Activated CD4-positive, alpha-beta memory T cell treated with anti-CD3 and anti-CD28 coated beads for 36 hours (primary cell): ENCODE measurements at regions of chr10 and their contacts with region 1.

Region 1: GRCh38 chr10:72692057-72692910 is at the start of gene MCU:
- DNase-seq: peak; percentile 95
- H3K4me3 Mint-ChIP-seq: peak within 1 kb of the TSS; percentile 82
- H3K27ac Mint-ChIP-seq: peak within 1 kb of the TSS; percentile 48
- H3K4me1 Mint-ChIP-seq: peaks cover 35% of the 10 kb centered on the region
- H3K27me3 Mint-ChIP-seq: no peaks in the 10 kb centered on the region
- total RNA-seq, gene MCU: 17.7 to 19.3 TPM

Region 2: DNA sequence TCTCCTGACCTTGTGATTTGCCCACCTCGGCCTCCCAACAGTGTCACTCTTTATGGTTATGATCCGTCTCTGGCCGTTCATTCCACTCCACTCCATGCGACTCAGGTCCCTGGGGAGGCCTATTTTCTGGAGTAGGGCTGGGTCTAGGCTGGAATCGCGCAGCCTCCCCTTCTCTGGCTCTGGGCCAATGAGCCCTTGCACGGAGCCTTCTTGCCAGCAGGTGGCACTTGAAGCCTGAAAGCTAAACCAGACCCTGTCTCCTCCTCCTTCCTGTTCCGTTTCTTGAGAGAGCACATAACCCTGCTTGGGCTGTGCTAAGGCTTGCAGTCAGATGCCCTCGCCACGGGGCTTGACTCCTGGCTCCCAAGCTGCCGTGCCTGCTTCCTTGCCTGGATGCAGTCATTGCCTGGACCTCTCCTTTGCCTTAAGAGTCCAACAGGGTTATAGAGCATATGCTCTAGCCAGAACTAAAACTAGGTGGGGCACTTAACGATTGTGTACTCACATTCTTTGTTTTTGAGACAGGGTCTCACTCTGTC is 328.0 kb before region 1 on chr10:
- CTCF ChIA-PET with region 1: interaction called, 8 read pairs
- POLR2A ChIA-PET with region 1: no interaction called
- intact Hi-C with region 1: loop called (anchors 5 kb)
- DNase-seq: peak; percentile 91
- H3K4me3 Mint-ChIP-seq: no peak overlapping the region
- H3K27ac Mint-ChIP-seq: no peak overlapping the region
- H3K4me1 Mint-ChIP-seq: peaks cover 14% of the 10 kb centered on the region
- H3K27me3 Mint-ChIP-seq: no peaks in the 10 kb centered on the region

Region 3: DNA sequence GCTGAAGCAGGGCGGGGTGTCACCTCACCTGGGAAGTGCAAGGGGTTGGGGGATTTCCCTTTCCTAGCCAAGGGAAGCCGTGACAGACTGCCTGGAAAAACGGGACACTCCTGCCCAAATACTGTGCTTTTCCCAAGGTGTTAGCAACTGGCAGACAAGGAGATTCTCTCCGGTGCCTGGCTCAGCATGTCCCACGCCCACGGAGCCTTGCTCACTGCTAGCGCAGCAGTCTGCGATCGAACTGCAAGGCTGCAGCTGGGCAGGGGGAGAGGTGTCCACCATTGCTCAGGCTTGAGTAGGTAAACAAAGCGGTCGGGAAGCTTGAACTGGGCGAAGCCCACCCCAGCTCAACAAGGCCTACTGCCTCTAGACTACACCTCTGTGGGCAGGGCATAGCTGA is 256.7 kb before region 1 on chr10:
- CTCF ChIA-PET with region 1: no interaction called
- POLR2A ChIA-PET with region 1: no interaction called
- intact Hi-C with region 1: no loop called
- DNase-seq: no peak
- H3K4me3 Mint-ChIP-seq: no peak overlapping the region
- H3K27ac Mint-ChIP-seq: no peak overlapping the region
- H3K4me1 Mint-ChIP-seq: no peaks in the 10 kb centered on the region
- H3K27me3 Mint-ChIP-seq: no peaks in the 10 kb centered on the region

Region 4: GRCh38 chr10:72625608-72626443 is 66.5 kb before region 1 on chr10 and contains the start of gene MICU1:
- CTCF ChIA-PET with region 1: no interaction called
- POLR2A ChIA-PET with region 1: interaction called, 4 read pairs
- intact Hi-C with region 1: loop called (anchors 2 kb)
- DNase-seq: peak; percentile 97
- H3K4me3 Mint-ChIP-seq: peak within 1 kb of the TSS; percentile 97
- H3K27ac Mint-ChIP-seq: peak within 1 kb of the TSS; percentile 86
- H3K4me1 Mint-ChIP-seq: peaks cover 10% of the 10 kb centered on the region
- H3K27me3 Mint-ChIP-seq: no peaks in the 10 kb centered on the region
- total RNA-seq, gene MICU1: 41.2 to 41.7 TPM

Region 5: DNA sequence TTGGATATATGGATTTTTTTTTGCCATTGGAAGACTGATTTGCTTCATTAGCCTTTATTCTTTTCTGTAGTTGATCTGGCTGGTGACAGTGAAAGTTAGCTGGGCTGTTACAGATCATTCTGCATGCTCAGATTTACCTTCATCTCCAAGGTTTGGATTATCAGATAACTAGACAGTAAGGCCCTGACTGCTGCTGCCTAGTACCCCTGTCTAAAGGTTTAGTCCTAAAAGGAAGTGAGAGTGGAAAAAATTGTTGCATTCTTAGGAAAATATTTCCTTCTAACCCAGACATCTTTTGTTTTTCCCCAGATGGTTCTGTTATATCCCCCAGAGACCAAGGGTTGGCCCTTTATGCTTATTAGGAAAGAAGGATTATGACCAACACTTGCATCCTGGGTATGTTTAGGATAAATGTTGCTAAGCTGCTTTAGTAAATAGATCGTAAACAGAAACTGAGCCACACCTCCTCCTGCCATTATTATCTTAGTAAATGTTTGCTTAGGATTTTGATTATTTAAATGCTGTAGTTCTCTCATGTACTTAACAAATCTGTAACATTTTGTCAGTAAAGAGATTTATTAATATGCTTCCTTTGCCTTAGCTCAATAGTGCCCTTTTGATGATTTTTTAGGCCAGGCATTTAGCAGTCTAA is 44.0 kb after region 1 on chr10:
- CTCF ChIA-PET with region 1: no interaction called
- POLR2A ChIA-PET with region 1: no interaction called
- intact Hi-C with region 1: no loop called
- DNase-seq: no peak
- H3K4me3 Mint-ChIP-seq: no peak overlapping the region
- H3K27ac Mint-ChIP-seq: no peak overlapping the region
- H3K4me1 Mint-ChIP-seq: peaks cover 5% of the 10 kb centered on the region
- H3K27me3 Mint-ChIP-seq: no peaks in the 10 kb centered on the region

Region 6: GRCh38 chr10:72746426-72747363 is 54.4 kb after region 1 on chr10:
- CTCF ChIA-PET with region 1: no interaction called
- POLR2A ChIA-PET with region 1: no interaction called
- intact Hi-C with region 1: no loop called
- DNase-seq: no peak
- H3K4me3 Mint-ChIP-seq: no peak overlapping the region
- H3K27ac Mint-ChIP-seq: no peak overlapping the region
- H3K4me1 Mint-ChIP-seq: no peaks in the 10 kb centered on the region
- H3K27me3 Mint-ChIP-seq: no peaks in the 10 kb centered on the region

Region 7: GRCh38 chr10:72834183-72834825 is 142.0 kb after region 1 on chr10:
- CTCF ChIA-PET with region 1: interaction called, 3 read pairs
- POLR2A ChIA-PET with region 1: interaction called, 3 read pairs
- intact Hi-C with region 1: loop called (anchors 2 kb)
- DNase-seq: peak; percentile 34
- H3K4me3 Mint-ChIP-seq: no peak overlapping the region
- H3K27ac Mint-ChIP-seq: no peak overlapping the region
- H3K4me1 Mint-ChIP-seq: no peaks in the 10 kb centered on the region
- H3K27me3 Mint-ChIP-seq: no peaks in the 10 kb centered on the region

Region 8: GRCh38 chr10:73096449-73097304 is 404.4 kb after region 1 on chr10 and contains the start of gene P4HA1:
- CTCF ChIA-PET with region 1: no interaction called
- POLR2A ChIA-PET with region 1: interaction called, 6 read pairs
- intact Hi-C with region 1: loop called (anchors 5 kb)
- DNase-seq: peak; percentile 99
- H3K4me3 Mint-ChIP-seq: peak within 1 kb of the TSS; percentile 92
- H3K27ac Mint-ChIP-seq: peak within 1 kb of the TSS; percentile 92
- H3K4me1 Mint-ChIP-seq: peaks cover 27% of the 10 kb centered on the region
- H3K27me3 Mint-ChIP-seq: no peaks in the 10 kb centered on the region
- total RNA-seq, gene P4HA1: 30.9 to 31.2 TPM